ENCODE measurements at regions of chr9 and their contacts with region 1.

Region 1: GRCh38 chr9:35657546-35658136 is at the start of gene RMRP:
- DNase-seq: peak; percentile 58 to 95 (median 76)
- ATAC-seq: peak; percentile 79 to 87 (median 81)
- H3K4me3 ChIP-seq: peak within 1 kb of the TSS; percentile 81 to 95
- H3K4me3 Mint-ChIP-seq: peak within 1 kb of the TSS; percentile 84 to 93 (median 89)
- H3K27ac ChIP-seq: peak within 1 kb of the TSS; percentile 99
- H3K27ac Mint-ChIP-seq: peak within 1 kb of the TSS; percentile 96 to 99
- H3K4me1 ChIP-seq: peaks cover 29 to 69% of the 10 kb centered on the region in 2 experiments
- H3K4me1 Mint-ChIP-seq: peaks cover 64 to 78% (median 67%) of the 10 kb centered on the region in 3 donors
- H3K27me3 ChIP-seq: no peaks in the 10 kb centered on the region
- H3K27me3 Mint-ChIP-seq: peaks cover 4 to 5% of the 10 kb centered on the region in 2 donors
- total RNA-seq, gene RMRP: 10,537 to 37,987 (median 30,491) TPM

Region 2: GRCh38 chr9:35603987-35604577 is 53.6 kb before region 1 on chr9:
- CTCF ChIA-PET with region 1: interaction called in 1 of 2 experiments, 18 read pairs
- POLR2A ChIA-PET with region 1: interaction called in 1 of 2 experiments, 3 read pairs
- DNase-seq: peak; percentile 96 to 100 (median 99)
- ATAC-seq: peak; percentile 84 to 90 (median 86)
- H3K4me3 ChIP-seq: peak overlapping the region; percentile 75 to 89
- H3K4me3 Mint-ChIP-seq: peak overlapping the region; percentile 95 to 97 (median 97)
- H3K27ac ChIP-seq: peak overlapping the region; percentile 87
- H3K27ac Mint-ChIP-seq: peak overlapping the region; percentile 98 to 100
- H3K4me1 ChIP-seq: peaks cover 14 to 36% of the 10 kb centered on the region in 2 experiments
- H3K4me1 Mint-ChIP-seq: peaks cover 37 to 39% (median 38%) of the 10 kb centered on the region in 3 donors
- H3K27me3 ChIP-seq: no peaks in the 10 kb centered on the region
- H3K27me3 Mint-ChIP-seq: no peaks in the 10 kb centered on the region

Region 3: GRCh38 chr9:35636135-35636876 is 21.3 kb before region 1 on chr9:
- CTCF ChIA-PET with region 1: interaction called, 4 to 13 read pairs
- POLR2A ChIA-PET with region 1: interaction called in 1 of 2 experiments, 4 read pairs
- DNase-seq: no peak
- ATAC-seq: no peak
- H3K4me3 ChIP-seq: no peak overlapping the region
- H3K4me3 Mint-ChIP-seq: no peak overlapping the region
- H3K27ac ChIP-seq: peak overlapping the region; percentile 57
- H3K27ac Mint-ChIP-seq: peak overlapping the region; percentile 41 to 82
- H3K4me1 ChIP-seq: peaks cover 20 to 30% of the 10 kb centered on the region in 2 experiments
- H3K4me1 Mint-ChIP-seq: peaks cover 47 to 65% (median 52%) of the 10 kb centered on the region in 3 donors
- H3K27me3 ChIP-seq: no peaks in the 10 kb centered on the region
- H3K27me3 Mint-ChIP-seq: no peaks in the 10 kb centered on the region

Region 4: DNA sequence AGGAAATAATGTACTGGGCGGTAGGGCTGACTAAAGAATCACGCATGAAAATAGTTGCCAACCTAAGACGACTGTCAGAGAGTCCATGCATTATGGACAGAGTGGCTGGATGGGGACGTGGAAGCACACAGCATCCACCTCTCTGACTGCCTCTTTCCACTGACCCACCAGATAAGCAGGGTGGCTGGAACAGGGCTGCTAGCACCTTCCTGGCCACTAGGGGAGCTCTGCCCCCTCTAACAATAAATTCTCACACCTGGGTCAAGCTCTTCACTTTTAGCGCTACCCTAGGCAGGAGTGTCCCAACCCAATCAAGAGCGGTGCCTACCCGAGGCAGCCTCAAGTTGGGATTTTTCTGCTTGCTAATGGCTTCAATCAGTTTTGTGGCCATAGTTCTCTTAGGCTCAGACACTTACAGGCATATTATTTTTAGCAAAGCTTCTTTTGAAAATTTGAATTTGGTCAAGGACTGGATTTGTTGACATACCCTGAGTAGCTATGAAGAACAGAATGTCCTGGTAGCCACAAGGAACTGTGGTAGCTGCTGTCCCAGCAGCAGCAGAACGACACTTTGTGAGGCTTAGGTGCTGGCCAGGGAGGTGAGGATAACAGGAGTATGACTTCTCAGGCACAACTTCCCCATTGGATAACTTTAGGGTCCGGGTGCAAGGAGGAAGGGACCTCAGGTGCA is 39.0 kb after region 1 on chr9:
- CTCF ChIA-PET with region 1: interaction called, 5 to 50 read pairs
- POLR2A ChIA-PET with region 1: no interaction called
- DNase-seq: peak in 31 of 35 experiments; percentile 15 to 75 (median 39)
- ATAC-seq: peak; percentile 85 to 93 (median 88)
- H3K4me3 ChIP-seq: no peak overlapping the region
- H3K4me3 Mint-ChIP-seq: no peak overlapping the region
- H3K27ac ChIP-seq: no peak overlapping the region
- H3K27ac Mint-ChIP-seq: peak overlapping the region; percentile 64 to 66
- H3K4me1 ChIP-seq: peaks cover 0 to 9% of the 10 kb centered on the region in 2 experiments
- H3K4me1 Mint-ChIP-seq: peaks cover 13 to 15% (median 14%) of the 10 kb centered on the region in 3 donors
- H3K27me3 ChIP-seq: no peaks in the 10 kb centered on the region
- H3K27me3 Mint-ChIP-seq: no peaks in the 10 kb centered on the region

Region 5: DNA sequence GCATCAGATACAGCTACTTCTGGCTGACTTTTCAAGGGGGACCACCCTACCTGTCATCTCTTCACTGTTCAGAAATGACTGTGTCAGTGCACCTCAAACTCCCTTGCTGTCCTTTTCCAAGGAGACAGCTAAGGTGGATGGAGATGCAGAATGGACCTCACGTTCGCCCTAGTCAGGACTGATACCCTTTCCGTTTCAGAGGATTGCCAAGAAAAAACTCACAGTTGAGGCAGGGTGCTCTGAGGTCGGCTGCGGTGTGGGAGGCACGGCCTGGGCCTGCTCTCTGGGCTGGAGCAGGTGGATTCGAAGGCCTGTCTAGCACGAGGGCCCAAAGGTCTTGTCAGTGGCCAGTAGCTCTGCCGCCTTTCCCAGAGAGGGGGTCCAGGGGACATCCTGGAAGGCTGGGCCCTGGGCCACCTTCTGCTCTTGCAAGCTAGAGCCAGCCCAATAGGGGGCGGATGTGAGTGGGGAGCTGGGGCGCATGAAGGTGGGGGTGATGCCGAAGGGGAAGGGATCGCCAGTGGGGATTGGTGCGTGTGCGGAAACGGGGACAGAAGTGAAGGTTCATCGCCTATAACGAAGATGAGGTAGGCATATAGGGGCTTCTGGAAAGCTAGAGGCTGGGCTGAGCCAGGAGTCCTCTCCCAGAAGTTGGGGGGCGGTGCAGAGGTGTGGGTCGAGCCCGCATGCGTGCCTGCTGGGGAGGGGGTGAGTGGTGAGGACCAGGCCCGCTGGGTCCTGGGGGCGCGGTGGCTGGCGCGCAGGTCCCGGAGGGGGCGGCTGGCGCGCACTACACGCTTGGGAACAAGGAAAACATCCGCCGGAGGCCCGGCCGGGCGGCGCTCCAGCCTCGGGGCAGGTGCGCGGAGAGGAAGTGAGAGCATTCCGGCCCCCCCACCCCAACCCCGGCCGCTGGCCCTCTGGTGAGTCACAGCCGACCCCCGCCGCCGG is 98.9 kb after region 1 on chr9:
- CTCF ChIA-PET with region 1: interaction called in 1 of 2 experiments, 13 read pairs
- POLR2A ChIA-PET with region 1: no interaction called
- DNase-seq: peak; percentile 51 to 84 (median 72)
- ATAC-seq: peak; percentile 87 to 95 (median 90)
- H3K4me3 ChIP-seq: peak overlapping the region; percentile 83 to 85
- H3K4me3 Mint-ChIP-seq: peak overlapping the region; percentile 88 to 94 (median 92)
- H3K27ac ChIP-seq: peak overlapping the region; percentile 74
- H3K27ac Mint-ChIP-seq: peak overlapping the region; percentile 94 to 95
- H3K4me1 ChIP-seq: peaks cover 2 to 18% of the 10 kb centered on the region in 2 experiments
- H3K4me1 Mint-ChIP-seq: peaks cover 50 to 58% (median 53%) of the 10 kb centered on the region in 3 donors
- H3K27me3 ChIP-seq: no peaks in the 10 kb centered on the region
- H3K27me3 Mint-ChIP-seq: no peaks in the 10 kb centered on the region

Measured in T-cell (primary cell).